ENCODE measurements at regions of chr6 and their contacts with region 1.

Region 1: DNA sequence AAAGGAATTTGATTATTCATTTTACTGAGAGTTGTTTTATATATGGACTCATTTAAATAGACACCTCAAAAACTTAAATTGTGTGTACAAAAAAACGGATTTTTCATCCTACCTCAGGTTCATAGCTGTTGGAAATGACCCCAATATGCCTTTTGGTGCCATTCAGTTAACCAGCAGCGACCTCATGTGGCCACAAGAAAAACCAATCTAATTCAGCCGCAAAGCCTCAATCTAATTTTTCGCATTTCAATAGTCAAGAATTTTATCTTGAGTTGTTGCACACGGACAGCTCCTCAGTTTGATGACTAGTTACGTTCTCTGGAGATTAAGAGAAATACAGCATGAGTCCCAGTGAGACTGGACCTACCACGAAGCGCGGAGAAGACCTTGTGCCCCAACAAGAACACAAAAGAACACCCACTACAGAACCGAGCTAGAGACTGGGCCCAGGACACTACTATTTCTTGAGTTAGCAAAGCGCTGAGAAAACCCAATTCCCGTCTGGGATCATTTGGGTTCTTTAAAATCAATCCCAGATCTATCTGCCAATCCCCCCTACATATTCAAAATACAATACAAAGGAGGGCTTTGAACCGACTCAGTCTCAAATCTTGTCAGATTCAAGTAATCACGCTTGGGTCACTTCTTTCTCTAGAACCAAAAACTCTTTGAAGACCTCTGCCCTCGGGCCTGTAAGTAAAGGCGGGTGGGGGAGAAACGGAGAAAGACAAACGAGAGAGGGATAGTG is 1.1 kb downstream of the TCP11 start:
- DNase-seq: no peak
- ATAC-seq: peak; percentile 61

Region 2: DNA sequence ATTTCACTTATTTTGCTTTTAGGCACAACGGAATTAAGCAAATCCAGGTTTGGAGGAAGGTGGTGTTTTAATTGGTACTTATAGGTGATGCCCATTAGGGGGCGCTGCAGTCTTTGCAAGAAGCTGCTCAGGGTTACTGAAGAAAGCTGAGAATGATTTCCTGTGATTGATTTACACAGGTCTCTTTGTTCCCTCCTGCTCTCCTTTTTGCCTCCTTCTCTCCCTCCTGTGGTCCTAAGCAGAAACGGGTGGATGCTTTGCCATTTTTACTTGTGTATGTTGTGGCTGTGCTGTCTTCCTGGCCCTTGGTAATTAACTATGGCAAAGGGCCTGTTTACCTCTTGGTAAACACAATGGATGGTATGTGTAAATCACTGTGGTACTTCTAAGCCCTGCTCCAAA is 153.2 kb before region 1 on chr6:
- intact Hi-C with region 1: loop called (anchors 2 kb)
- DNase-seq: peak; percentile 48
- ATAC-seq: peak; percentile 83

Region 3: GRCh38 chr6:35259194-35259947 is 119.3 kb after region 1 on chr6 and contains the start of gene ZNF76:
- intact Hi-C with region 1: no loop called
- DNase-seq: peak; percentile 100
- ATAC-seq: peak; percentile 92
- total RNA-seq, gene ZNF76: 44.1 TPM

Region 4: GRCh38 chr6:35678021-35678654 is 538.1 kb after region 1 on chr6:
- intact Hi-C with region 1: no loop called
- DNase-seq: no peak
- ATAC-seq: no peak

Measured in left ventricle myocardium superior (tissue), 1 donor.